CD8-positive, alpha-beta T cell (primary cell): ENCODE measurements at regions of chr1 and their contacts with region 1.

Region 1: GRCh38 chr1:65075123-65075976 is 72.7 kb upstream of the AK4 start:
- DNase-seq: peak; percentile 27 to 88 (median 70)
- ATAC-seq: peak; percentile 98
- H3K4me3 ChIP-seq: no peak overlapping the region
- H3K4me3 Mint-ChIP-seq: no peak overlapping the region
- H3K27ac ChIP-seq: no peak overlapping the region
- H3K27ac Mint-ChIP-seq: no peak overlapping the region
- H3K4me1 ChIP-seq: no peaks in the 10 kb centered on the region
- H3K4me1 Mint-ChIP-seq: peaks cover 19% of the 10 kb centered on the region
- H3K27me3 ChIP-seq: no peaks in the 10 kb centered on the region
- H3K27me3 Mint-ChIP-seq: peaks cover 2% of the 10 kb centered on the region
- CTCF ChIP-seq: peak; percentile 74

Region 2: GRCh38 chr1:63294803-63295594 is 1780.4 kb before region 1 on chr1:
- CTCF ChIA-PET with region 1: no interaction called
- POLR2A ChIA-PET with region 1: no interaction called
- intact Hi-C with region 1: no loop called
- DNase-seq: no peak
- ATAC-seq: no peak
- H3K4me3 ChIP-seq: no peak overlapping the region
- H3K4me3 Mint-ChIP-seq: no peak overlapping the region
- H3K27ac ChIP-seq: no peak overlapping the region
- H3K27ac Mint-ChIP-seq: no peak overlapping the region
- H3K4me1 ChIP-seq: no peaks in the 10 kb centered on the region
- H3K4me1 Mint-ChIP-seq: no peaks in the 10 kb centered on the region
- H3K27me3 ChIP-seq: no peaks in the 10 kb centered on the region
- H3K27me3 Mint-ChIP-seq: peaks cover 5% of the 10 kb centered on the region
- CTCF ChIP-seq: no peak

Region 3: DNA sequence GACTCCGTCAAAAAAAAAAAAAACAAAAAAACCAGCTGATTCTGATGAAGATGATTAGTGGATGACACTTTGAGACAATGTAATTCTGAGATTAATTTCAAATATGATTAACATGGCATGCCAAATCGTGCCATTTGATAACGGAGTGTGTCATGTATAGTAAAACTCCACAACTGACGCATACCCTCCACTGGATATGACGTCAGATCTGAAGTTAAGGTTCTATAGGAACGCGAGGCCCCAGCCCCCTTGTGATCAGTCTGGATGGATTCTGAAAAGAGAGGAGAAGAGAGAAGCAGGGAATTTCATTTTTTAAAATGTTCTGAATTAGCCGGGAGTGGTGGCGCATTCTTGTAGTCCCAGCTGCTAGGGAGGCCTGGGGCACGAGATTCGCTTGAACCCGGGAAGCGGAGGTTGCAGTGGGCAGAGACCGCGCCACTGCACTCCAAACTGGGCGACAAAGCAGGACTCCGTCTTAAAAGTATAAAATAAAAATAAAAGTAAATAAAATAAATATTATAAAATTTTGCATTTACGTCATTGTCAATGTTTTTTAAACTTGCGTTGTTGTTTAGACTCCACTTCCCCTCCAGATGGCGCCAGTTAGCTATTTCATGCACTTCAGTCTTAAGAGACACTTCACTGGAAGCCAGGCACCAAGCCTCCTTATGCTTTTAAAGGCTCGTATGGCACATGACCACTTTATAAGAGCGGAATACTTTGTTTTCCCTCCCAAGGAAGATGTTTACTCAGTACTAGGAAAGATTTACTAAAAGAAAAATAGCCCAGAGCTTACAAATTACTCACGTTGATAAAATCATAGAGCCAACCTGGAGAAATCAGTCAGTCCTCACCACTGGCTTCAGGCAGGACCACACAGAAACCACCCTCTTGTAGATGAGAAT is 806.4 kb before region 1 on chr1:
- CTCF ChIA-PET with region 1: interaction called, 3 read pairs
- POLR2A ChIA-PET with region 1: no interaction called
- intact Hi-C with region 1: loop called in 1 of 2 experiments (anchors 10 kb)
- DNase-seq: peak; percentile 5 to 77 (median 60)
- ATAC-seq: peak; percentile 52
- H3K4me3 ChIP-seq: no peak overlapping the region
- H3K4me3 Mint-ChIP-seq: no peak overlapping the region
- H3K27ac ChIP-seq: no peak overlapping the region
- H3K27ac Mint-ChIP-seq: no peak overlapping the region
- H3K4me1 ChIP-seq: no peaks in the 10 kb centered on the region
- H3K4me1 Mint-ChIP-seq: no peaks in the 10 kb centered on the region
- H3K27me3 ChIP-seq: peaks cover 0 to 4% of the 10 kb centered on the region in 2 experiments
- H3K27me3 Mint-ChIP-seq: peaks cover 13% of the 10 kb centered on the region
- CTCF ChIP-seq: peak; percentile 68

Region 4: DNA sequence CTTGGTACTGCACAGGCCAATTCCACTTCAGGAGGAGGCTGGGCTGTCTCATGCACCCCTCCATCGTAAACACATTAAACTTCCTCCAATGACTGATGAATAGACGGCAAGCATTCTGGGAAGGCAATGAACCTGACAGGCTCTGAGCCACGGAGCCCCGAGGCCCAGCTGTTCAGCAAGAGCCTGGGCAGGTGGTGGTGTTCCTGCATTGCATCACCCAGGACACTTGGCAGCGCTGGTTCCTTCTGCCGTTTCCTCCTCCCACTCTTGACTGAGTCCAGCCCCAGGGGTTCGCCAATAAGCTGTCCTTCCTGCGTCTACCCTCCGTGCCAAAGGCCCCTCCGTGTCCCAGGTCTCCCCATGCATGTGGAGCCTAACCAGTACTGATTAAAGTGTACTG is 218.8 kb before region 1 on chr1:
- CTCF ChIA-PET with region 1: interaction called, 9 read pairs
- POLR2A ChIA-PET with region 1: interaction called, 3 read pairs
- intact Hi-C with region 1: loop called (anchors 1 to 5 kb)
- DNase-seq: no peak
- ATAC-seq: no peak
- H3K4me3 ChIP-seq: no peak overlapping the region
- H3K4me3 Mint-ChIP-seq: no peak overlapping the region
- H3K27ac ChIP-seq: no peak overlapping the region
- H3K27ac Mint-ChIP-seq: no peak overlapping the region
- H3K4me1 ChIP-seq: no peaks in the 10 kb centered on the region
- H3K4me1 Mint-ChIP-seq: peaks cover 18% of the 10 kb centered on the region
- H3K27me3 ChIP-seq: no peaks in the 10 kb centered on the region
- H3K27me3 Mint-ChIP-seq: no peaks in the 10 kb centered on the region
- CTCF ChIP-seq: no peak

Region 5: DNA sequence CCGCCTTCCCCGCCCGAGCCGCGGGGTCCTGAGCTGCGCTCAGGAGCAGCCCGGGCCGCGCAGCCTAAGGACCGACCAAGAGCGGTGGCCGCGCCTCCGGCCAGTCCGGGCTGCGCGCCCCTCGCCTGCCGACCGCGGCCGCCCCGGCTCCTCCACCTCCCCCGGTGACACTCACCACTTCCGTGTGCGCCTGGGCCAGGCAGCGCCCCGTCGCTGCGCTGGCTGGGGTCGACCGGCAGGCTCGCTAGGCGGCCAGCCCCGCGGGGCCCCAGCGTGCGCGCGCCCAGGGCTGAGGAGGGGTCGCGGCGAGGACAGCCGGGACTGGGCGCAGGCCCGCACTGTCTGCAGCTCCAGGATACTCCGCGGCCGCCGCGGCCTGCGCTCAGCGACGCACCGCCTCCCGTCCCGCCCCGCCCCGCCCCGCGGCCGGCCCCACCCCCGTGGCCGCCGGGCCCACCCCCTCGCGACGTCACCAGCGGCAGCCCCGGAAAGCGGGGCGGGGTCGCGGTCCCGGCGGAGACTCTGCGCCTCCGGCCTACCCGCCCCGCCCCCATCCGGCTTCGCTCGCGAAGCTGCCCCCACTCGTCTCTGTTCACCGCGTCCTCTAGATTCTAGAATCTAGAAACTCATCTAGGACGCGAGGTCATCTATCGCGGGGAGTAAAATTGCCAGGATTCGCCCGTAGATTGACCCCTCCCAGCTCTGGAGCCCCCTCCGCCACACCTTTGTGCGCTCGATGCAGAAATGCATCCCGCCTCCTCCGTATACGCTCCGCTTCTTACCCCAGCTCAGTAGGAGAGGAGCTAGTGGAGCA is 109.0 kb before region 1 on chr1 and contains the start of gene JAK1:
- CTCF ChIA-PET with region 1: interaction called, 11 read pairs
- POLR2A ChIA-PET with region 1: interaction called, 5 read pairs
- intact Hi-C with region 1: no loop called
- DNase-seq: peak; percentile 77 to 95 (median 92)
- ATAC-seq: peak; percentile 83
- H3K4me3 ChIP-seq: peak within 1 kb of the TSS; percentile 81 to 95
- H3K4me3 Mint-ChIP-seq: peak within 1 kb of the TSS; percentile 92
- H3K27ac ChIP-seq: peak within 1 kb of the TSS; percentile 87 to 97
- H3K27ac Mint-ChIP-seq: peak within 1 kb of the TSS; percentile 97
- H3K4me1 ChIP-seq: peaks cover 51% of the 10 kb centered on the region
- H3K4me1 Mint-ChIP-seq: peaks cover 51% of the 10 kb centered on the region
- H3K27me3 ChIP-seq: no peaks in the 10 kb centered on the region
- H3K27me3 Mint-ChIP-seq: no peaks in the 10 kb centered on the region
- CTCF ChIP-seq: no peak
- total RNA-seq, gene JAK1: 280 to 298 TPM

Region 6: DNA sequence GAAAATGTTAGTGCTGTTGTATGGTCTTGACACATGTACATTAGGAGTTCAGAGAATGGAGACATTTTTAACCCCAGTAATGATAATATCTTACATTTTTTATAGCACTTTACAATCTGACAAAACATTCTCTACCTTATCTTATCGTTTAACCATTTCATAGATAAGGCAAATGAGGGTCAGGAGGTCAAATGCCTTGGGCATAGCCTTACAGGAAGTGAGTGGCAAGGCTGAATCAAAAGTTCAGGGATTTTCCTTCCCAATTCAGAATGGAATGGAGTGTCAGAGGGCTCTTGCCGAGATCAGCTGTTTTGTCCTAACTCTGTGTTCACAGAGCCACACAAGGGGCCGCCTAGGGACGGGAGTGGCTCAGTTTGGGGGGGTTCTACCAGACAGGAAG is 15.1 kb after region 1 on chr1:
- CTCF ChIA-PET with region 1: interaction called, 11 read pairs
- POLR2A ChIA-PET with region 1: no interaction called
- intact Hi-C with region 1: no loop called
- DNase-seq: no peak
- ATAC-seq: no peak
- H3K4me3 ChIP-seq: no peak overlapping the region
- H3K4me3 Mint-ChIP-seq: no peak overlapping the region
- H3K27ac ChIP-seq: no peak overlapping the region
- H3K27ac Mint-ChIP-seq: no peak overlapping the region
- H3K4me1 ChIP-seq: no peaks in the 10 kb centered on the region
- H3K4me1 Mint-ChIP-seq: no peaks in the 10 kb centered on the region
- H3K27me3 ChIP-seq: no peaks in the 10 kb centered on the region
- H3K27me3 Mint-ChIP-seq: peaks cover 3% of the 10 kb centered on the region
- CTCF ChIP-seq: no peak

Region 7: GRCh38 chr1:67053785-67054772 is 1978.7 kb after region 1 on chr1 and contains the start of gene SLC35D1:
- CTCF ChIA-PET with region 1: no interaction called
- POLR2A ChIA-PET with region 1: no interaction called
- intact Hi-C with region 1: loop called in 1 of 2 experiments (anchors 10 kb)
- DNase-seq: peak; percentile 62 to 87 (median 83)
- ATAC-seq: peak; percentile 78
- H3K4me3 ChIP-seq: peak within 1 kb of the TSS; percentile 80 to 85
- H3K4me3 Mint-ChIP-seq: peak within 1 kb of the TSS; percentile 89
- H3K27ac ChIP-seq: peak within 1 kb of the TSS; percentile 90 to 96
- H3K27ac Mint-ChIP-seq: peak within 1 kb of the TSS; percentile 96
- H3K4me1 ChIP-seq: peaks cover 10% of the 10 kb centered on the region
- H3K4me1 Mint-ChIP-seq: peaks cover 35% of the 10 kb centered on the region
- H3K27me3 ChIP-seq: no peaks in the 10 kb centered on the region
- H3K27me3 Mint-ChIP-seq: no peaks in the 10 kb centered on the region
- CTCF ChIP-seq: no peak
- total RNA-seq, gene SLC35D1: 18.4 to 18.5 TPM